IMR-90 (cell line): ENCODE measurements at regions of chr6 and their contacts with region 1.

Region 1: DNA sequence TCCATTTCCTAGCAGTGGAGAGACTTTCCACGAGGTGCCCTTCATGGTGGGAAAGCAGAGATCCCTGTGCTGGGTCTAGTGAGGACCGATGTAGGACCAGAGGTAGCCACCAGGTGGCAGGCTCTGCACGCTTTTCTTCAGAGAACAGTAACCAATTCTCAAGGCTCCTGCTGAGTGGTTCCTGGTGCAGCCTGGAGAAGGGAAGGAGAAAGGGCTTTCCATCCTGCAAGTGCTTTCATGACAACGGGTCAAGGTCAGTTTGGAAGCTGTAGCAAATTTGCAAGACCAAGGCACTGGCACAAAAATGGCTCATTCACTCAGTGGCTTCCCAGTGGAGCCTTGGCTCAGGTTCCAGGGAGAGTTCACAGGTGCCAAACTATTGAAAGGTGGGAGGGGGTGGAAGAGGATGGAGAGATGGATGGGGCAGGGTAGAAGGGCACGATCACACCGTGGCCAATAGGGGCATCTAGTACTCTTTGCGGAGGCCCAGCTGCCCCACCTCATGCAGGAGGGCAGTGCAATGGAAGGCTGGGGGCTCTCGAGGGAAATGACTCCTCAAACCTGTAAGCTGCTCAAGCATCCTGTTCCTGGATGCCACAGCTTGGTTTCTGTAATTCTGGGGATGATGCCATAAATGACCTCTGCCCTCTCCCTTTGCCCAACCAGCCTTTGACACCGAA is 25.5 kb upstream of the KCNK16 start:
- DNase-seq: peak; percentile 51
- ATAC-seq: peak; percentile 99
- H3K4me3 ChIP-seq: no peak overlapping the region
- H3K27ac ChIP-seq: no peak overlapping the region
- H3K4me1 ChIP-seq: no peaks in the 10 kb centered on the region
- H3K27me3 ChIP-seq: no peaks in the 10 kb centered on the region; the same call in 1 of the 2 replicates
- CTCF ChIP-seq: peak; percentile 82
- POLR2A ChIP-seq: no peak
- RAD21 ChIP-seq: peak; percentile 82

Region 2: DNA sequence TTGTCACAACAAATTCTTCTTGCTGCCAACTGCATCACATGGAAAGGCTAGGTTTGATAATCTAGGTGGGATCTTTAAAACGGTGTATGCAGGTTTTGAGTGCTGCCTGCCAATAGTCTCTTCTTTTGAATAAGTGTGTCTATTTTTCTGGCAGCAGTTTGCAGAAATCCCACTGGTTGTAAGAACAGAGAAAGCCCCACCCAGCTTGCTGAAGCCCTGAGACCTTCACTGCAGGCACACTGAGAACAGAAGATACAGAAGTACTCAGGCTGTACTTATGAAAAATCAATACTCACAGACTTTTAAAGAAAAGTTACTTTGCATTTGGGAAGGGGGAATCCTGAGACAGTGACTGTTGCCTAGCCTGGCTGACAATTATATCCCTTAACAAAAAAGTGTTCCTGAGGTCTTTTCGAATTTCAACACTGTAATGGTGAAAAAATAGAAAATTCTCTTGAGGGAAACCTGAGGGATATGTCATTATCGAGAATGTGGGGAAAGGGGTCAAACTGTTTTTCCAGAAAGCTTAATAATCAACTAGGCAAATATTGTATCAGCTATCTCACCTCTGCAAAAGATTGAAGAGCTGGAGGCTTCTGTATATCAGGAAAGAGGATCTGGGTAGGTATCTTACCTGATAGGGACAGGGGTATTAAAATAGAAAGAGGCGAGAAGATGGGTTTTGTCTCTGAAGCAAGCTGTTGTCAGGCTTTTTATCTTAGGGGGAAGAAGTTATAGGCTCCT is 1039.3 kb after region 1 on chr6:
- CTCF ChIA-PET with region 1: no interaction called
- POLR2A ChIA-PET with region 1: no interaction called
- dilution Hi-C with region 1: no loop called
- in situ Hi-C with region 1: no loop called
- intact Hi-C with region 1: no loop called
- DNase-seq: no peak
- ATAC-seq: no peak
- H3K4me3 ChIP-seq: no peak overlapping the region
- H3K27ac ChIP-seq: no peak overlapping the region
- H3K4me1 ChIP-seq: no peaks in the 10 kb centered on the region
- H3K27me3 ChIP-seq: no peaks in the 10 kb centered on the region
- CTCF ChIP-seq: no peak
- POLR2A ChIP-seq: no peak
- RAD21 ChIP-seq: no peak

Region 3: GRCh38 chr6:41066867-41067304 is 1718.8 kb after region 1 on chr6:
- CTCF ChIA-PET with region 1: no interaction called
- POLR2A ChIA-PET with region 1: no interaction called
- dilution Hi-C with region 1: no loop called
- in situ Hi-C with region 1: no loop called
- intact Hi-C with region 1: loop called (anchors 10 kb)
- DNase-seq: peak; percentile 84
- ATAC-seq: peak; percentile 40; the same call in 1 of the 2 replicates
- H3K4me3 ChIP-seq: no peak overlapping the region
- H3K27ac ChIP-seq: no peak overlapping the region
- H3K4me1 ChIP-seq: no peaks in the 10 kb centered on the region
- H3K27me3 ChIP-seq: no peaks in the 10 kb centered on the region
- CTCF ChIP-seq: peak; percentile 79
- POLR2A ChIP-seq: no peak
- RAD21 ChIP-seq: peak; percentile 78